ENCODE measurements at regions of chr20 and their contacts with region 1.

Region 1: GRCh38 chr20:32674362-32674789 is 635 bp upstream of the C20orf203 start:
- DNase-seq: peak in 2 of 4 donors; percentile 22 to 30
- ATAC-seq: peak; percentile 79
- H3K4me3 ChIP-seq: no peak overlapping the region
- H3K27ac ChIP-seq: no peak overlapping the region
- H3K4me1 ChIP-seq: peaks cover 0 to 28% of the 10 kb centered on the region in 2 donors
- H3K27me3 ChIP-seq: no peaks in the 10 kb centered on the region
- CTCF ChIP-seq: peak; percentile 45 to 60

Region 2: GRCh38 chr20:32779500-32780211 is 105.3 kb after region 1 on chr20:
- intact Hi-C with region 1: loop called in 1 of 2 experiments (anchors 5 kb)
- DNase-seq: no peak
- ATAC-seq: no peak
- H3K4me3 ChIP-seq: no peak overlapping the region
- H3K27ac ChIP-seq: no peak overlapping the region
- H3K4me1 ChIP-seq: peaks cover 0 to 6% of the 10 kb centered on the region in 2 donors
- H3K27me3 ChIP-seq: no peaks in the 10 kb centered on the region
- CTCF ChIP-seq: no peak